ENCODE measurements at regions of chr17 and their contacts with region 1.

Region 1: DNA sequence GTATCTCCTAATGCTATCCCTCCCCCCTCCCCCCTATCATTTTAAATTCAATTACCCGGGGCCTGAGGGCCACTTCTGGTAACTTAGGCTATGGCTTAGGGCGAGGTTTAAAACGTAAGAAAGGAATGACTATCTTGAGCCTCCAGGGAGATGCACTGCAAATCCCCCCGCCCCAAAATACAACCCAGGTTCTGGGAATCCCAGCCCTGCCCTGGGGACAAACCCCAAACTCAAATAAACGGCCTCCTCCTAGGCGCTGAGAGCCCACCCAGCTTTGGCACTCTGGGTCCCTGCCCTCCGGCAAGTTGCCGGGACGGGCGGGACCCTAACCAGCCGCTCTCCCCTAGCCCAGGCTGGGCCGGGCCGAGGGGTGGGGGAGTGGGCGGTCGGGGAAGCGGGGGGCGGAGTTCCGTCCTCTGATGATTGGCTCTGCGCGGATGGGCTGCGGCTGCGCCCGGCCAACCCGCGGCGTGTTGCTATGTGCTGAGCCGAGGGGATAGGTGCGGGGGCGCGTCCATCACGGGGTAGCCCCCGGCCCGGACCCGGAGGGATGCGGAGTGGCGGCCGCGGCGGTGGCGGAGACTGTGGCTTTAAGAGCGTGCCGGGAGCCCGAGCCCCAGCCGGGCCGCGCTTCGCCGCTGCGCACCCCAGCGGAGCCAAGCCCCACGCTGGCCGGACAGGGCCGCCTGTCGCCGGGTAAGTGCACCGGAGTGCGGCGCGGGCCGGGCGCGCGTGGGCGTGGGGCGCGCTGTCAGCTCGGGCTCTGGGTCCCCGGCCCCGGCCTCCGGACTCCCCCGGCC is at the start of gene YPEL2:
- DNase-seq: peak; percentile 98
- H3K4me3 ChIP-seq: peak within 1 kb of the TSS; percentile 26 to 95 (median 94)
- H3K27ac ChIP-seq: peak within 1 kb of the TSS; percentile 85 to 97 (median 96)
- H3K4me1 ChIP-seq: peaks cover 40 to 76% of the 10 kb centered on the region in 2 donors
- H3K27me3 ChIP-seq: no peaks in the 10 kb centered on the region
- CTCF ChIP-seq: no peak
- POLR2A ChIP-seq: peak; percentile 90 to 98
- total RNA-seq, gene YPEL2: 29.5 to 67.2 (median 39.9) TPM

Region 2: DNA sequence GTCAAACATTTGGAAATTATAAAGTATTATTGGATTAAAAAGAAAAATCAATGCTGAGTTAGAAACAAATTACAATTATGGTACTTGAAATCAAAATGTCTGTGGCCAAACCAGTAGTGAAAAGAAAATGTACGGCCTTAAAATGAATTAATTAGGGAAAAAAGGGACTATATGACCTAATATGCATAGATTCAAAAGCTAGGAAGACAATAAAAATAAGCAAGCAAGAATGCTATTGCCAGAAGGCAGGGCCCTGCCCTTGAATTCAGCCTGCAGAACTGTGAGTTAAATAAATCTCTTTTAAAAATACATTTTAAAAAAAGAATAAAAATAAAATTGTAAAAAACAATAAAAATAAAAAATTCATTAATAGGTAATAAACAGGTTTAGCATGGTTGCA is 313.3 kb before region 1 on chr17:
- intact Hi-C with region 1: no loop called
- DNase-seq: no peak
- H3K4me3 ChIP-seq: no peak overlapping the region
- H3K27ac ChIP-seq: no peak overlapping the region
- H3K4me1 ChIP-seq: no peaks in the 10 kb centered on the region
- H3K27me3 ChIP-seq: no peaks in the 10 kb centered on the region
- CTCF ChIP-seq: no peak
- POLR2A ChIP-seq: no peak

Region 3: DNA sequence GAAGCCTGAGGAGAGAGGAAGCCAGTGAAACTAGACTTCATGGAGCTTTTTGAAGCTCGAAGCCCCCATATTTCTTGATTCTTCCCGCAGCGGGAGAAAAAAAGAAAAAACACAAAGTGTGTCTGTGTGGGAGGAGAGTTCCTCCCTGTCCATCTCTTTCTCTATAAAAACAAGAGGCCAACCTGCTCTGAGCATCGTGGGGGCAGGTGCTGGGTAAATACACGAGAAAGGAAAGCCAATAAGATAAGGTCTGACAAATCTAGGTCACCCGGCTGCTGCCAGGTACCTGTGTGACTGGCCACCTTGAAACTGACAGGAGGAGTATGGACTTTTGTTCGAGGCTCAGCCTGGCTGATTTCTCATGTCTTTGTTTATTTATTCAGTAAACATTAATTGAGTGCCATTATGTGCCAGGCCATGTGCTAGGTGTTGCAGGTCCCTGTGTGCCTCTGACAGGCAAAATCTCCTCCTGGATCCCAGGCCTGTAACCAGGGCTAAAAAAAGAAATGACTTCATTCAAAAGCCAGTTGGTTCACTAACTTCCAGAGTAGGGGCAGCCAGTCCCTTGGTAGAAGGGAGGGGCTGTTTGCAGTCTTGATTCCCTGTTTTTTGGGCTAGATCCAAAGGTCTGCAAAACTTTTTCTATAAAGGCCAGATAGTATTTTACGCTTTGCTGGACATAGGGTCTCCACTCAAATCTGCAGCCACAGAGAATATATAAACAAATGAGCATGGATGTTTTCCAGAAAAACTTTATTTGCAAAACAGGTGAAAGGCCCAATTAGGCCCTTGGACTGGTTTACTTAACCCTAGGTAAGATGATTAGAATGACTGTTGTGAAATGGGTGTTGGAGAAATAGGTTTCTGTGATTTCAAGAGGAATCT is 35.7 kb after region 1 on chr17:
- intact Hi-C with region 1: loop called (anchors 5 kb)
- DNase-seq: peak; percentile 72 to 81
- H3K4me3 ChIP-seq: no peak overlapping the region
- H3K27ac ChIP-seq: peak overlapping the region; percentile 89 to 96 (median 92)
- H3K4me1 ChIP-seq: peaks cover 95 to 97% of the 10 kb centered on the region in 2 donors
- H3K27me3 ChIP-seq: no peaks in the 10 kb centered on the region
- CTCF ChIP-seq: no peak
- POLR2A ChIP-seq: peak in 1 of 2 donors; percentile 10

Region 4: DNA sequence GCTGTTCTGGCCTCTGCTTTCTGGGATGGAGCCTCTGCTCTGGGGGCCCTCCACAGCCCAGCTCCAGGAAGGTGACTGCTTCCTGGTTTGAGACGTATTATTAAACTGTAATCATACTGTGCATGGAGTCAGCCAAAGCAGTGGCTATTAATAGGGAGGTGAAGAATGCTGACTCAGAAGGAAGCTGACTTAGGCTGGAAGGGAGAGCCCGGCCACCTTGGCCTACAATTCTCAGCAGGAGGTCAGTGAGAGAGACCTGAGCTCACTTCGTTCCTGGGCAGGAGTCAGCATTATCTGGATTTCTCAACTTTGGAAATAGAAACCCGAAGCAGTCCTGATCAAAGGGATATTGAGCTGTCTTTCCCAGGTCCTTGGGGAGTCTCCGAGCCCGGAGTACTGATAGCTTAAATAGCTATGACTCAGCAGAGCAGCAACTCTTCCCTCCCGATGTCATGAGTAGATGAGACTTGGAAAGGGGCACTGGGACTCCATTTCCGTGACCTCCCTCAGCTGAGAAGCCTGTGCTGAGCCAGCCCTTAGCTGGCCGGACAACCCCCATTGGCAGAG is 91.9 kb after region 1 on chr17:
- intact Hi-C with region 1: loop called (anchors 5 kb)
- DNase-seq: peak; percentile 69 to 71
- H3K4me3 ChIP-seq: no peak overlapping the region
- H3K27ac ChIP-seq: peak overlapping the region; percentile 67 to 86 (median 81)
- H3K4me1 ChIP-seq: peaks cover 56 to 73% of the 10 kb centered on the region in 2 donors
- H3K27me3 ChIP-seq: no peaks in the 10 kb centered on the region
- CTCF ChIP-seq: no peak
- POLR2A ChIP-seq: peak in 1 of 2 donors; percentile 27

Region 5: GRCh38 chr17:59435238-59435637 is 103.9 kb after region 1 on chr17:
- intact Hi-C with region 1: loop called (anchors 5 kb)
- DNase-seq: no peak
- H3K4me3 ChIP-seq: no peak overlapping the region
- H3K27ac ChIP-seq: peak overlapping the region; percentile 10 to 26 (median 11)
- H3K4me1 ChIP-seq: peaks cover 25 to 30% of the 10 kb centered on the region in 2 donors
- H3K27me3 ChIP-seq: no peaks in the 10 kb centered on the region
- CTCF ChIP-seq: no peak
- POLR2A ChIP-seq: no peak

Region 6: GRCh38 chr17:59565171-59565969 is 234.0 kb after region 1 on chr17 and contains the start of gene DHX40:
- intact Hi-C with region 1: no loop called
- DNase-seq: peak; percentile 92 to 95
- H3K4me3 ChIP-seq: peak within 1 kb of the TSS; percentile 61 to 91 (median 64)
- H3K27ac ChIP-seq: peak within 1 kb of the TSS; percentile 23 to 79 (median 73)
- H3K4me1 ChIP-seq: peaks cover 0 to 10% of the 10 kb centered on the region in 2 donors
- H3K27me3 ChIP-seq: no peaks in the 10 kb centered on the region
- CTCF ChIP-seq: no peak
- POLR2A ChIP-seq: peak in 1 of 2 donors; percentile 61
- total RNA-seq, gene DHX40: 47.8 to 65.4 (median 59.7) TPM

Region 7: GRCh38 chr17:59619293-59620063 is 288.1 kb after region 1 on chr17 and contains the start of gene CLTC:
- intact Hi-C with region 1: no loop called
- DNase-seq: peak; percentile 93
- H3K4me3 ChIP-seq: peak within 1 kb of the TSS; percentile 89 to 95 (median 92)
- H3K27ac ChIP-seq: peak within 1 kb of the TSS; percentile 98 to 99 (median 98)
- H3K4me1 ChIP-seq: peaks cover 36 to 38% of the 10 kb centered on the region in 2 donors
- H3K27me3 ChIP-seq: no peaks in the 10 kb centered on the region
- CTCF ChIP-seq: no peak
- POLR2A ChIP-seq: peak; percentile 91 to 99
- total RNA-seq, gene CLTC: 250 to 474 (median 364) TPM

Measured in thyroid gland (tissue), 4 donors.